Activated CD8-positive, alpha-beta memory T cell treated with anti-CD3 and anti-CD28 coated beads, Interleukin-2, amount 10 ng/mL, durations not matched to agents 7 days and 5 days (primary cell): ENCODE measurements at regions of chr11 and their contacts with region 1.

Region 1: DNA sequence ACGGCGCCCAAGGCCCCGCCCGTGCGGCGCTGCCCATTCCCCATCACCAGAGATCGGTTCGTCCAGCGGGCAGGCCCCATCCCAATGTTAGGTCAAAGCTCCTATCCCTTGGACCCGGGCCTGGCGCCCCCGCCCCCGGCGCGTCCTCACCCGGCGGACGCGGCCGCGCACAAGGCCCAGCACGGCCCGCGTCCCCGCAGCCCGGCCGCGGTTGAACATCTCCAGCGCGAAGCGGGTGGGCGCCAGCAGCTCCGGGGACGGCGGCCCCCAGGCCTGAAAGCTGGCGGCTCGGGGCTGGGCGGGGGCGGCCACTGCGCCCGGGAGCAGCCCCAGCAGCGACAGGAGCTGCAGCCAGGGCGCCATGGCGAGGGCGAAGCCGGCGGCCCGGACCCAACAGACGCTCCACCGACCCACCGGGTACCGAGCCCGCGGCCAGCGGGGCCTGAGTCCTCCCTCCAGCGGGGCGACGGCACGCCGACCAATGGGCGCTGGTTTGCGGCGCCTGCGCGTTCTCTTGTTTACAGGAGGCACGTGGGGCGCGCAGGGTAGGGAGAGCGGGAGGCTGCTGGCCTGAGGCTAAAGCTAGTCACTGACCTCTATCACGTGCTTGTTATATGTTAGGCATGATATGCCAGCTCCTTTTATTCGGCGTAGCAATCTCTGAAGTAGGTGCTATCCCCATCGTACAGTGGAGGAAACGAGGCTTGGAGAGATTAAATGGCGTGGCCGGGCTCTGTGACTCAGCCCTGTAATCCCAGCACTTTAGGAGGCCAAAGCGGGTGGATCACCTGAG is at the start of gene CTSF:
- DNase-seq: peak; percentile 71
- ATAC-seq: peak; percentile 95
- H3K4me3 Mint-ChIP-seq: peak within 1 kb of the TSS; percentile 54
- H3K27ac Mint-ChIP-seq: no peak within 1 kb of the TSS
- H3K4me1 Mint-ChIP-seq: peaks cover 5% of the 10 kb centered on the region
- H3K27me3 Mint-ChIP-seq: peaks cover 25% of the 10 kb centered on the region
- total RNA-seq, gene CTSF: 2.8 to 4.1 TPM

Region 2: GRCh38 chr11:66579017-66579606 is 10.8 kb after region 1 on chr11:
- CTCF ChIA-PET with region 1: interaction called, 16 read pairs
- DNase-seq: peak; percentile 78
- ATAC-seq: peak; percentile 80
- H3K4me3 Mint-ChIP-seq: no peak overlapping the region
- H3K27ac Mint-ChIP-seq: no peak overlapping the region
- H3K4me1 Mint-ChIP-seq: peaks cover 6% of the 10 kb centered on the region
- H3K27me3 Mint-ChIP-seq: peaks cover 14% of the 10 kb centered on the region